ENCODE measurements at regions of chr3 and their contacts with region 1.

Region 1: GRCh38 chr3:171066206-171066605 is 39.7 kb upstream of the SLC2A2 start:
- DNase-seq: no peak
- H3K4me3 ChIP-seq: no peak overlapping the region
- H3K27ac ChIP-seq: no peak overlapping the region
- H3K4me1 ChIP-seq: no peaks in the 10 kb centered on the region
- CTCF ChIP-seq: no peak

Region 2: DNA sequence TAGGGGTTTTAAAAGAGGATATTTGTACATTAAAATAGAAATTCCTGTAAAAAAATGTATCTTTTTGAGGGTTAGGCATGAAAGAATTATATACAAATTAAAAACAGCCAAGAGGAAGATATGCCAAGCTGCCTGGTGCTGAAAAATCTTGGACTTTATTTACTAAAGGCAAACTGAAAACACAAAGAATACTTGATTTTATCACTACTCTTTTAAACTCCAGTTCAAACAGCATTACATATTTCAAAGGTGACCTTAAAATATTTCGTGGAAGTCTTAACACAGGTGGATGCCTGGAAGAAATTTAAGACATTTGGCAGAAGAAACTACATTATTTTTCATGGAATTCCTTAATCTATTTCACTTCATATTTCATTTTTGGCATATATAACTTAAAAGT is 61.4 kb after region 1 on chr3:
- CTCF ChIA-PET with region 1: no interaction called
- POLR2A ChIA-PET with region 1: interaction called, 12 read pairs
- intact Hi-C with region 1: no loop called
- DNase-seq: no peak
- H3K4me3 ChIP-seq: no peak overlapping the region
- H3K27ac ChIP-seq: no peak overlapping the region
- H3K4me1 ChIP-seq: no peaks in the 10 kb centered on the region
- CTCF ChIP-seq: no peak